ENCODE measurements at regions of chr5 and their contacts with region 1.

Region 1: DNA sequence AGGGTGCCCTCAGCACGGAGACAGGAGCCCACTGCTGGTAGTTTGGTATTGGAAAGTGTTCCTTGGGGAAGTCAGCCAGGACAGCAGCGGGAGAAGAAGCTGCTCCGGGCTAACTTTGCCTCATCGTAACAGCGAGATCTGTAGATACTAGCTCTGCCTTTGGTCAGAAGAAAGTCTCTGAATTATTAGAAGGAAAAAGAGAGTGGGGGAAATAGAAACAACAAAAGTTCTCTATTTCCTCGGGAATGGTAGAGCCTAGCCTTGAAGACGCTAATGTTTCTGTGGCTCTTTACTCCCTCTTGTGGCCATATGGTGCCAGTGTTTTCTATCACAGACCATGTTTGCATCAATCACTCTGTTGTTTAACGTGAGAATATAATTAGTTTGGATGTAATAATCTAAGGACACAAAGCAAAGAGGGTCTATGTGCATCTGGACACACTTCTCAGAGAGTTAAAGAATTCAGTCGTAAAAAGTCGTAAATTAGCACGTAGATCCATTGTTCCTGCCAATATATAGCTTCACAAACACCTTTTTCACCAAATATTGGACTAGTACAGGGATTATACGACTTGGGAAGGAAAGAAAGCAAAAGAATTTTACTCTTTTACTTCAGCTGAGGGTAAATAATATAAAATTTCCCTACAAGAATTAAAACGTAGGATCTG is 40.2 kb upstream of the HSD17B4 start:
- DNase-seq: peak; percentile 93
- H3K4me3 Mint-ChIP-seq: peak overlapping the region; percentile 72
- H3K27ac Mint-ChIP-seq: peak overlapping the region; percentile 77
- H3K4me1 Mint-ChIP-seq: peaks cover 14% of the 10 kb centered on the region
- H3K27me3 Mint-ChIP-seq: no peaks in the 10 kb centered on the region
- CTCF ChIP-seq: peak; percentile 96

Region 2: DNA sequence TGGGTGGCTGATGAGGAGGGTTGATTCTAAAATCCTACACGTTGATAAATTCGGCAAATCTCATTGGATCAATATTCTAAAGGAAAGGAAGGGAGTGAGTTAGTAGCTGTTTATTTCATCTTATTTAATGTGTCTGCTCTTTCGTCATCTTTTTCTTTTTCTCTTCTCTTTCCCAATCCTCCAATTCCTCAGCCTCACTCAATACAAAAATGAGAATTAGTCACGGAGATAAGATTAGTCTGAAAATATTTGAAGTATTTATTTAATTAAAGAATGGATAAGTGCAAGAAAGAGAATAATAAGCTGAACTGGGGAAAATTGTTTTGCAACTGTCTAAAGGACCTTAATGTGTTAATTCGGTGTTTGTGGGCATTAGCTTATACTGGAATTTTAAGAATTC is 1518.9 kb before region 1 on chr5:
- CTCF ChIA-PET with region 1: no interaction called
- POLR2A ChIA-PET with region 1: no interaction called
- intact Hi-C with region 1: no loop called
- DNase-seq: no peak
- H3K4me3 Mint-ChIP-seq: no peak overlapping the region
- H3K27ac Mint-ChIP-seq: no peak overlapping the region
- H3K4me1 Mint-ChIP-seq: peaks cover 10% of the 10 kb centered on the region
- H3K27me3 Mint-ChIP-seq: no peaks in the 10 kb centered on the region
- CTCF ChIP-seq: no peak

Region 3: DNA sequence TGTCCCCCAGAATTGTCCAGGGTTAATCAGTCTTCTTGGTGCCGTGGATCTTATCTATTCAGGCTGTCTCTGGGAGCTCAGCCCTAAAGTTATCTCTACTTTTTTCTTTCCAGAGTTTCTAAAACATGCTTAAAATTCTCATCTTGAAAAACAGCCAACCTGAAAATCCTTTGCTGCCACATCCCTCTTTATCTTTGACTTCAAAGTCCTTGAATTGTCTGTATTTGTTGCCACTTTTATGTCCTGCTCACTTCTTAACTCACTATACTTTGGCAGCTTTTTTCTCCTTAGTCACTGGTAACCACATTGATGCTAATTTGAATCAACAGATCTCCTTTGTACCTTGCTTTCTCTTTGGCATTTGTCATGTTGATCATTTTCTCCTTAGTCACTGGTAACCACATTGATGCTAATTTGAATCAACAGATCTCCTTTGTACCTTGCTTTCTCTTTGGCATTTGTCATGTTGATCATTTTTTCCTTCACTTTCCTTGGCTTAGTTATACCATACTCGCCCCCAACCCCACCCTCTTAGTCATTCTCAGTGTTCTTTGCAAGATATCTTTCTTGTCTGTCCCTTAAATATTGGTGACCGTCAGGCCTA is 332.6 kb before region 1 on chr5:
- CTCF ChIA-PET with region 1: interaction called, 11 read pairs
- POLR2A ChIA-PET with region 1: no interaction called
- intact Hi-C with region 1: no loop called
- DNase-seq: no peak
- H3K4me3 Mint-ChIP-seq: no peak overlapping the region
- H3K27ac Mint-ChIP-seq: no peak overlapping the region
- H3K4me1 Mint-ChIP-seq: peaks cover 23% of the 10 kb centered on the region
- H3K27me3 Mint-ChIP-seq: no peaks in the 10 kb centered on the region
- CTCF ChIP-seq: no peak

Region 4: GRCh38 chr5:119267958-119268386 is 144.1 kb before region 1 on chr5:
- CTCF ChIA-PET with region 1: interaction called, 16 read pairs
- POLR2A ChIA-PET with region 1: interaction called, 20 read pairs
- intact Hi-C with region 1: loop called (anchors 1 kb)
- DNase-seq: peak; percentile 99
- H3K4me3 Mint-ChIP-seq: peak overlapping the region; percentile 86
- H3K27ac Mint-ChIP-seq: peak overlapping the region; percentile 81
- H3K4me1 Mint-ChIP-seq: peaks cover 17% of the 10 kb centered on the region
- H3K27me3 Mint-ChIP-seq: no peaks in the 10 kb centered on the region
- CTCF ChIP-seq: peak; percentile 55

Region 5: DNA sequence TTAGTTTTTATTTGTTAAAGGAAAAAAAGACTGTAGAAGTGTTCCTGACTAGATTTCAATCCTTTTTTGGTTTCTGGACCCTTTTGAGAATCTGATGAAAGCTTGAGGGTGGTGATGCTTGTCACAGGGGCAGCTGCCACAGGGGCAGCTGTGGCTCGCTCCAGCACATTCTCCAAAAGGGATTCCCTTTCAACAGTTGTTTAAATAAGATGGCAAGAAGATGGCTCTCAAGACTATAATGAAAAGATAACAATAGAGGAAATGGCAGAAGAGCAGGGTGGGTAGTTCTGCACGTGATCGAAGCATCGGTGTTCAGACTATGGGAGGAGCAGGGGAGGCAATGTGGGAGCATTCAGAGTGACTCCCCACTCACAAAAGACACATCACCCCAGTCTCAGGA is 102.7 kb before region 1 on chr5:
- CTCF ChIA-PET with region 1: interaction called, 93 read pairs
- POLR2A ChIA-PET with region 1: interaction called, 10 read pairs
- intact Hi-C with region 1: no loop called
- DNase-seq: no peak
- H3K4me3 Mint-ChIP-seq: no peak overlapping the region
- H3K27ac Mint-ChIP-seq: no peak overlapping the region
- H3K4me1 Mint-ChIP-seq: peaks cover 6% of the 10 kb centered on the region
- H3K27me3 Mint-ChIP-seq: no peaks in the 10 kb centered on the region
- CTCF ChIP-seq: no peak

Region 6: GRCh38 chr5:119335261-119335677 is 76.8 kb before region 1 on chr5:
- CTCF ChIA-PET with region 1: interaction called, 253 read pairs
- POLR2A ChIA-PET with region 1: interaction called, 72 read pairs
- intact Hi-C with region 1: loop called (anchors 1 kb)
- DNase-seq: no peak
- H3K4me3 Mint-ChIP-seq: peak overlapping the region; percentile 72
- H3K27ac Mint-ChIP-seq: peak overlapping the region; percentile 76
- H3K4me1 Mint-ChIP-seq: peaks cover 45% of the 10 kb centered on the region
- H3K27me3 Mint-ChIP-seq: no peaks in the 10 kb centered on the region
- CTCF ChIP-seq: no peak

Region 7: DNA sequence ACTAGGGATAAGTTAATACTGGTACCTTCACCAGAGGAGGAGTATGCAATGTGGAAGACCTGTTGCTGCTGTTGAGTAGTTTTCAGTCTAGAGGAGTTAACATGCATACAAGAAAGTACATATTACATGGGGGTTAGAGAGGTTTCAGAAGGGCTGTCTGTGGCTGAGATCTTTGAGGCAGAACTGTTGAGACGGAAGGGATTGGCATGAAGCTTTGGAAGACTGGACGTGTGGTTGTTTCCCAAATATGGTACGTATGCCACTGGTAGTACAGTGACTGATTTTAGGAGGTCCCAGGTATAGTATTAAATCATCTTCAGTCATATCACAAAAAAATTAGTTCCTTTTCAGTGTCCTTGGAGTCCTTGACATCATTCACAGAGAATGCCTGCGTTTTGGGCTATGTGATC is 38.6 kb before region 1 on chr5:
- CTCF ChIA-PET with region 1: interaction called, 12 read pairs
- POLR2A ChIA-PET with region 1: interaction called, 17 read pairs
- intact Hi-C with region 1: no loop called
- DNase-seq: no peak
- H3K4me3 Mint-ChIP-seq: no peak overlapping the region
- H3K27ac Mint-ChIP-seq: no peak overlapping the region
- H3K4me1 Mint-ChIP-seq: peaks cover 8% of the 10 kb centered on the region
- H3K27me3 Mint-ChIP-seq: no peaks in the 10 kb centered on the region
- CTCF ChIP-seq: no peak

Region 8: DNA sequence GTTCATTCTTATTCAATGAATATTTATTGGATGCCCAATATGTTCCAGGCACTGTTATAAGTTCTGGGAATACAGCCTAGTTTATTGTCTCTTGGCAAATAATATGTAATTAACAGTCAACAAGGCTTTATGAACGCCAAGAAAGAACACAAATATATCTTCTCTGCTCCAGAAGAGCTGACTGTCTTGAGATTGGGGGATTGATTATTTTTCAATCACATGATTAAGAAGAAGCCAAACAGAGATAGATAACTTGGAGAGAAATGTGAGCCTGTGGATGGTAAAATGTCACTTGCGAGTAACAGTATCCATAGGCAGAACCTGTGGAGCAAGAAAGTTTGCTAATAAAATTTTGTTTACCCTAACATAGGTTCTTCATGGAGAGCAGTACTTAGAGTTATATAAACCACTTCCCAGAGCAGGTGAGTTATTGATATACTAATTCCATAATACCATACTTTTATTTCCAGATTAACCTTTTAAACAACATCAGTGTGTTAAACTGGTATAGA is 89.7 kb after region 1 on chr5:
- CTCF ChIA-PET with region 1: no interaction called
- POLR2A ChIA-PET with region 1: no interaction called
- intact Hi-C with region 1: no loop called
- DNase-seq: no peak
- H3K4me3 Mint-ChIP-seq: no peak overlapping the region
- H3K27ac Mint-ChIP-seq: no peak overlapping the region
- H3K4me1 Mint-ChIP-seq: no peaks in the 10 kb centered on the region
- H3K27me3 Mint-ChIP-seq: no peaks in the 10 kb centered on the region
- CTCF ChIP-seq: no peak

Region 9: DNA sequence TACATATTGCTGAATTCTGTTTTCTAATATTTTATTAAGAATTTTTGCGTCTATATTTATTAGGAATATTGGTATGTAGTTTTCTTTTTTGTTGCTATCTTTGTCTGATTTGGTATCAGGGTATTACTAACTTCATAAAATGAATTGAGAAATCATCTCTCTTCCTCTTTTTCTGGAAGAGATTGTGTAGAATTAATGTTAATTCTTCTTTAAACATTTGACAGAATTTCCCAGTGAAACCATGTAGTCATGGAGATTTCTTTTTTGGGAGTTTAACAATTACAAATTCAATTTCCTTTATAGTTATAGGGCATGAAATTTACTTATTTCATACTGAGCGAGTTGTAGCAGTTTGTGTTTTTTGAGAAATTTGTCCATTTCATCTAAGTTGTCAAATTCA is 214.0 kb after region 1 on chr5:
- CTCF ChIA-PET with region 1: no interaction called
- POLR2A ChIA-PET with region 1: no interaction called
- intact Hi-C with region 1: no loop called
- DNase-seq: no peak
- H3K4me3 Mint-ChIP-seq: no peak overlapping the region
- H3K27ac Mint-ChIP-seq: no peak overlapping the region
- H3K4me1 Mint-ChIP-seq: no peaks in the 10 kb centered on the region
- H3K27me3 Mint-ChIP-seq: no peaks in the 10 kb centered on the region
- CTCF ChIP-seq: no peak